ENCODE measurements at regions of chr6 and their contacts with region 1.

Region 1: GRCh38 chr6:41591859-41592502 is 45.8 kb downstream of the FOXP4 start:
- DNase-seq: peak; percentile 89

Region 2: GRCh38 chr6:41367700-41368099 is 224.3 kb before region 1 on chr6:
- intact Hi-C with region 1: loop called (anchors 5 kb)
- DNase-seq: no peak

Region 3: GRCh38 chr6:41463062-41463930 is 128.7 kb before region 1 on chr6:
- intact Hi-C with region 1: loop called (anchors 5 to 10 kb)
- DNase-seq: peak; percentile 87

Region 4: DNA sequence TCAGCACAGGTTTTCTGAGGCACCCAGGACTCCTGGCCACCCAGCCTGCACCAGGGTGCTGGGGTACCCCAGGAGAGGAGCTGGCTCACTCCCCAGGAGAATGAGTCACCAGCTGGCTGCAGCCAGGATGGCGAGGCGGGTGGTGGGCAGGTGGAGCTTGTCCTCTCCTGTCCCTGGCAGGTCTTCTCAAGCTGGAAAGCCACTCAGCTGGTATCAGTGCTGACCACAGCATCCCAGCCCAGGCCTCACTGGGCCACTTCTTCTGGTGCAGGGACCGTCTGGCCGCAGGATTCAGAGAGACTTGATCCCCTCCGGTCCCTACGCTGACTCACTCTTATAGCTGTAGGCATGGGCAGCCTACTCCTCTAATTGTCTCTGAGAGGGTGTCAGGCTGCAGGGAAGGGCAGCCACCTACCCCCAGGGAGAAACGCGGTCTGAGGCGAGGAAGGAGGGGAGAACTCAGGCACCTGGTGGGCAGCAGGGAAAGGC is 121.2 kb after region 1 on chr6:
- intact Hi-C with region 1: no loop called
- DNase-seq: no peak

Region 5: GRCh38 chr6:43593938-43594337 is 2002.0 kb after region 1 on chr6:
- intact Hi-C with region 1: no loop called
- DNase-seq: no peak

Measured in posterior vena cava (tissue), 2 donors.